Activated T-helper 2 cell treated with anti-CD3 and anti-CD28 coated beads, Interferon-gamma antibody, Interleukin-2, Interleukin-4, amounts not matched to agents 10 μg/mL and 5 μg/mL and 100 μg/mL, durations not matched to agents 14 hours and 24 hours and 36 hours (primary cell): ENCODE measurements at regions of chr4 and their contacts with region 1.

Region 1: GRCh38 chr4:47836641-47837093 is 1.2 kb downstream of the CORIN start:
- DNase-seq: peak; percentile 22
- H3K4me3 Mint-ChIP-seq: peak overlapping the region; percentile 79
- H3K27ac Mint-ChIP-seq: no peak overlapping the region
- H3K4me1 Mint-ChIP-seq: peaks cover 23% of the 10 kb centered on the region
- H3K27me3 Mint-ChIP-seq: peaks cover 44% of the 10 kb centered on the region

Region 2: GRCh38 chr4:47686294-47686872 is 150.3 kb before region 1 on chr4:
- intact Hi-C with region 1: loop called (anchors 1 kb)
- DNase-seq: peak; percentile 32
- H3K4me3 Mint-ChIP-seq: no peak overlapping the region
- H3K27ac Mint-ChIP-seq: no peak overlapping the region
- H3K4me1 Mint-ChIP-seq: peaks cover 4% of the 10 kb centered on the region
- H3K27me3 Mint-ChIP-seq: peaks cover 15% of the 10 kb centered on the region

Region 3: GRCh38 chr4:47873877-47874541 is 37.3 kb after region 1 on chr4:
- intact Hi-C with region 1: loop called (anchors 1 kb)
- DNase-seq: no peak
- H3K4me3 Mint-ChIP-seq: no peak overlapping the region
- H3K27ac Mint-ChIP-seq: peak overlapping the region; percentile 66
- H3K4me1 Mint-ChIP-seq: peaks cover 21% of the 10 kb centered on the region
- H3K27me3 Mint-ChIP-seq: no peaks in the 10 kb centered on the region

Region 4: DNA sequence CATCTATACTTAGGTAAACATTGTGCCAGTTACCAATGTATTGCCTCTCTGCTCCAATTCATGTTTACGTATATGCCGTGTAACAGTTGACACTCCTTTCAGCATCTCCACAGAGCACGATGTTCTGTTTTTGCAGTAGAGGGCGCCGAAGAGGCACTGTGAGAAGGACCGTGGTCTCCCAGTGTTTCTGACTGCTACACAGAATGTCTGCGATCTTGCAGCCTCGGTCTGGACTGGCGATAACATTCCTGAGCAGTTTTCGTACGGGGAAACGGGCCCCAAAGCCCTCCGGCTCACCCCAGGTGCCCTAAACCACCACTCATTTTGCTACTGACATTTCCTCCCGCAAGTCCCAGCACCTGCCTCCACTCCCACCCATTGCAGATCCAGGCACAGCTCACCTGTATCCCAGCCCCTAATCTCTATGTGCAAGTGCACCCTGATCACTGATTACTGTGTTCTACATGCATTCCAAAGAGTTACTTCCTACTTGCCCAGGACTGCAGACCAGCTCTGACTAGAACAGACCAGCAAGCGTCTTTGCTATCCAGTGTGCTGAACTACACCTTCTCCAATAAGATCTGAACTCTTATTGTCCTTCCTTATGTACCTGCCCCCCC is 90.1 kb after region 1 on chr4:
- intact Hi-C with region 1: loop called (anchors 5 kb)
- DNase-seq: peak; percentile 26
- H3K4me3 Mint-ChIP-seq: no peak overlapping the region
- H3K27ac Mint-ChIP-seq: no peak overlapping the region
- H3K4me1 Mint-ChIP-seq: peaks cover 7% of the 10 kb centered on the region
- H3K27me3 Mint-ChIP-seq: peaks cover 36% of the 10 kb centered on the region

Region 5: GRCh38 chr4:48027653-48028052 is 191.0 kb after region 1 on chr4:
- intact Hi-C with region 1: no loop called
- DNase-seq: no peak
- H3K4me3 Mint-ChIP-seq: no peak overlapping the region
- H3K27ac Mint-ChIP-seq: no peak overlapping the region
- H3K4me1 Mint-ChIP-seq: peaks cover 20% of the 10 kb centered on the region
- H3K27me3 Mint-ChIP-seq: peaks cover 30% of the 10 kb centered on the region

Region 6: DNA sequence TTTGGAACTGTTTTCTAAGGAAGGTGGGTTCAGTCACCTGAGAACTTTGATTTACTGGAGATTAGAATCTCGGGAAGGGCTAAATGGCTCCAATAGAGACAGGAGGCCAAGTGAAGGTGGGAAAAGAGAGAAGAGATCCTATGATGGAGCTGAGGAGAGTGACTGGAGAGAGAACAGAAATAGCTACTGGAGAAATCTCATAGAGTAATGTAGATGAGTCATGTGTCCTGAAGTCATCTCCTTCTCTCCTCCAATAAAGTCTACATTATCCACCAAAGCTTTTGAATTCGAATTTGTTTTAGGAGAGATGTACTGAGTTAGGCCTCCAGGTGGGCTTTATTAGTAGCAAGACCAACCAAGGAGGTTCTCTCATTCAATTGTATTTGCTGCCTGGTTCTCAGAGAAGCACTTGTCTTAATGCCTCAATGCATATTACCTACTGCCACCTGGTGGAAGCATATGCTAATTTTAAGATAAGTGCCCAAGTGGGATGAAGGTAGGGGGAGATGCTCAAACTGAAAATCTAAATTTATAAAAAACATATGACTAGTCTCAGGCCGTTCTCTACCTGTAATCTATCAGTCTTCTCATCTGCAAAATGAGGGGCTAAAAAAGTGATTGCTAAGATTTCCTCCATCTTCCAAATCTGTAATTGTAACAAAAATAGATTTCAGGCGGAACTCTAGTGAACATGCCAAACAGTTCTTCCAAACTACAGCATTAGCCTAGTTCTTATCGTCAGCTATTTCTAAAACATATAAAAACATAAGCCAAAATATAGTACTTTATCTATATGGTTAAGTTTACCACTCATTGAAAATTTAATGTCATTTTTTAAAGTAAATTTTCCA is 273.0 kb after region 1 on chr4:
- intact Hi-C with region 1: loop called (anchors 10 kb)
- DNase-seq: no peak
- H3K4me3 Mint-ChIP-seq: no peak overlapping the region
- H3K27ac Mint-ChIP-seq: no peak overlapping the region
- H3K4me1 Mint-ChIP-seq: peaks cover 11% of the 10 kb centered on the region
- H3K27me3 Mint-ChIP-seq: no peaks in the 10 kb centered on the region